ENCODE measurements at regions of chr3 and their contacts with region 1.

Region 1: GRCh38 chr3:113495035-113495434 is 19.9 kb downstream of the SPICE1 start:
- DNase-seq: no peak
- ATAC-seq: no peak

Region 2: GRCh38 chr3:113441051-113441770 is 53.8 kb before region 1 on chr3 and contains the start of gene CFAP44:
- intact Hi-C with region 1: no loop called
- DNase-seq: peak; percentile 82
- ATAC-seq: peak; percentile 93
- total RNA-seq, gene CFAP44: 2.2 TPM

Region 3: GRCh38 chr3:113454057-113454456 is 41.0 kb before region 1 on chr3:
- intact Hi-C with region 1: no loop called
- DNase-seq: no peak
- ATAC-seq: no peak

Region 4: DNA sequence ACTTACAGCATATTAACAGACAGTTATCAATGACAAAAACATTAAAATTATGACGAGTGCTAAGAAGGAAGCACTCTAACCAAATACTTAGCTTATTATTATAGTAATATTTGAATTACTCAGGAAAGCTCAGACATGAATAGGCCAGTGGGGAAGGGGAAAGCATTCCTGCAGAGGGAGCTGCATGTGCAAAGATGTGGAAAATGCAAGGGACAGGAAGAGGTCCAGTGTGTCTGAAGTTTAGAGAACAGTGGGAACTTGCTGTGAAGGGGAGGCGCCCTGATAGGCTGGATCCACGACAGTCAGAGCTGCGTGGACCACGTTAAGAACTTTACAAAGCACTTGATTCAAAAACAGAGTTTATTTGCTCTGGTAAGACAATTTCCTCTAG is 21.1 kb after region 1 on chr3:
- intact Hi-C with region 1: no loop called
- DNase-seq: no peak
- ATAC-seq: no peak

Region 5: DNA sequence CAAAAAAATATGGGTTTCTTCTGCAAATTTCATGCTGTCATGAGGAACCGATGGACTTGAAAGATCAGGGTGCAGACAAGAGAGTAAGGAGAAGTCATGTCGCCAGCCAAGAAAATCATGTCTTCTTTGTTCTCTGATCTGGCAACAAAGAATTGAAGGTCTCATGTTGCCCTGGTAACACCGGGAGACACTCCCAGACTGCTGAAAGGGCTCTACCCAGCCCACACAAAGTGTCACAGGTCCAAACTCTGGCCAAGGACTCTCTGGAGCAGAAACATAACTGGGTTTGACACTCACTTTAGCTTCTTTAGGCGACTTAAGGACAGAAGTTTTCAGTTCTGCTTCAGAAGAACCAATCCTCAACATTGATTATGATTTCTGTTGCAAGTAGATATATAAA is 80.2 kb after region 1 on chr3:
- intact Hi-C with region 1: loop called (anchors 5 kb)
- DNase-seq: no peak
- ATAC-seq: no peak

Region 6: DNA sequence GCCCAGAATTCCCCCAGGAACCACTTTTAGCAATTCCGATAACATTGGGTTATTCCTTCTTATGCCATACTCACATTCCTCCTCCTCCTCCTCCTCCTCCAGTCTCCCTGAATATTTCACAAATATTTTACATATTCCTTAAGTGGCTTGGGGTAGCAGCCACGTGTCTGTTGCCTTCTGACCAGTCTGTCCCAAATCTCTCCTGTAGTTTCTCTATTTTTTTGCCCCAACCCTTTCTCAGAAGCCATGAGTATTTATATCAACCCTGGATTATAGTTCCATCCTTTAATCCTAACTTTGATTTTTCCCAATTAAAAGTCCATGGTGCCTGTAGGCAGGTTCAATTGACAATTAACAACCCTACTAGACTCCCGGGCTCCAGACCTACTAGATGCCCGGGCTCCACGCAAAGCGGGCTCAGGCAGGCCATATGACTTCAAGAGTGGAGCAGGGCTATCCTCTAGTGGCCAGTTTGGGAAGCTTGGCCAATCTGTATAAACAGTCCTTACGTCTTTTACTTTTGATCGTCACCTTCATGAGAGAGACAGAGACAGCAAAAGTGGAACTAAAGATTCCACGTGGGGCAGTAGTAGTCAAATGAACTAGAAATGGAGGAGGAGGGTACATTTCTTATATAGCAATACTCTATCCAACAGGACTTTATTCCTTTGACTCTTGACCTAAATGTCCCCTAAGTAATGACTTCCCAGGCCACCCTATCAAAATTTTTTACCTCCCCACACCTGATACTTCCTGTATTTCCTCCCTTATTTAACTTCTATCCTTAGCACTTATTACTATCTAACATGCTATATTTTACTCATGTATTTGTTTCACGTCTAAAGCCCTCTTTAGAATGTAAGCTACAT is 131.7 kb after region 1 on chr3:
- intact Hi-C with region 1: loop called (anchors 1 kb)
- DNase-seq: peak; percentile 81
- ATAC-seq: peak; percentile 94

Region 7: DNA sequence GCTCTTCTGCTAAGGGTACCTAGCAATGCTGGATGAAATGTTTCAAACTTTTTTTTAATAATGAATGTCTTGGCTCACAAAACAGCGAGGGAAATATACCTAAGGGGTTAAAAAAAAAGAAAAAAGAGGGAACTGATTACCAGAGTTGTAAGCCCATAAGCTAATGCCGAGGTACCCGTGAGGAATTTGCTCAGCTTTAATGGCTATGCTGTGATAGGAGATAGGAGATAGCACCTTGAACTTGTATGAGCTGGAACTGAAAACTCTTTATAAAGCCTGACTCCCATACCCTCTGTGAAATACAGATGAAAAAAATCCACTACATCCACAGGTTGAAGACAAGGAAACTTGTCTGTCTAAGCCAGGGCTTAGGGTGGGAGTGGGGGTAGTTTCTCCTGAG is 357.5 kb after region 1 on chr3:
- intact Hi-C with region 1: no loop called
- DNase-seq: no peak
- ATAC-seq: no peak

Measured in Right ventricle myocardium inferior (tissue), 1 donor.